GM12878 (cell line): ENCODE measurements at regions of chr9 and their contacts with region 1.

Region 1: DNA sequence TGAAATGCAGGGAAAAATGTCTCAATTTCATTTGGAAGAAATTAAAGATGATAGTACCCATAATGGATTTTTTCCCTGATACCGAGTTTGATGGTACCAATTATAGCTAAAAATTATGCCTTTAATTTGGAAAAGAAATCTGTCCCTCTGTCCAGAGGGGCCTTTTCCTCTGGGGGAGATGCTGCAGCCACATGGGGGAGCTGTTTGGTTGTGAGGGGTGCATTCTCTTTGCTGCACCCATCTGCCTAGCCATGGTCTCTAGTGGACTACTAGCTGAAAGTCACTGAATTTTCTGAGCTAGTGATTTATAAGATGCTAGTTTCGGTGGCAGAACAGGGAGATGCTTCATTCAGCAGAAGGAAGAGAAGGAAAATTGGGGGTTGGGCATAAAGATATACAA is 9.6 kb downstream of the SEC61B start:
- DNase-seq: peak; percentile 25
- ATAC-seq: peak; percentile 53
- H3K4me3 ChIP-seq: no peak overlapping the region
- H3K27ac ChIP-seq: no peak overlapping the region
- H3K4me1 ChIP-seq: peaks cover 26% of the 10 kb centered on the region
- H3K27me3 ChIP-seq: no peaks in the 10 kb centered on the region
- CTCF ChIP-seq: peak; percentile 85 to 90 (median 88)
- EP300 ChIP-seq: no peak
- POLR2A ChIP-seq: no peak
- RAD21 ChIP-seq: peak; percentile 81

Region 2: GRCh38 chr9:98303623-98304125 is 928.0 kb before region 1 on chr9:
- CTCF ChIA-PET with region 1: no interaction called
- POLR2A ChIA-PET with region 1: no interaction called
- RAD21 ChIA-PET with region 1: no interaction called
- SMC1A ChIA-PET with region 1: no interaction called
- in situ Hi-C with region 1: no loop called
- intact Hi-C with region 1: no loop called
- DNase-seq: no peak
- ATAC-seq: no peak
- H3K4me3 ChIP-seq: no peak overlapping the region
- H3K27ac ChIP-seq: no peak overlapping the region
- H3K4me1 ChIP-seq: no peaks in the 10 kb centered on the region
- H3K27me3 ChIP-seq: no peaks in the 10 kb centered on the region
- CTCF ChIP-seq: no peak
- EP300 ChIP-seq: no peak
- POLR2A ChIP-seq: no peak
- RAD21 ChIP-seq: no peak

Region 3: GRCh38 chr9:99162759-99163364 is 68.8 kb before region 1 on chr9:
- CTCF ChIA-PET with region 1: interaction called, 38 read pairs
- POLR2A ChIA-PET with region 1: interaction called, 6 read pairs
- RAD21 ChIA-PET with region 1: interaction called, 22 read pairs
- SMC1A ChIA-PET with region 1: interaction called, 8 read pairs
- in situ Hi-C with region 1: no loop called
- intact Hi-C with region 1: no loop called
- DNase-seq: no peak
- ATAC-seq: peak; percentile 72
- H3K4me3 ChIP-seq: no peak overlapping the region
- H3K27ac ChIP-seq: no peak overlapping the region
- H3K4me1 ChIP-seq: peaks cover 12% of the 10 kb centered on the region
- H3K27me3 ChIP-seq: no peaks in the 10 kb centered on the region
- CTCF ChIP-seq: peak; percentile 49 to 81 (median 65); a peak in 5 of 6 replicates
- EP300 ChIP-seq: no peak
- POLR2A ChIP-seq: no peak
- RAD21 ChIP-seq: peak; percentile 94

Region 4: DNA sequence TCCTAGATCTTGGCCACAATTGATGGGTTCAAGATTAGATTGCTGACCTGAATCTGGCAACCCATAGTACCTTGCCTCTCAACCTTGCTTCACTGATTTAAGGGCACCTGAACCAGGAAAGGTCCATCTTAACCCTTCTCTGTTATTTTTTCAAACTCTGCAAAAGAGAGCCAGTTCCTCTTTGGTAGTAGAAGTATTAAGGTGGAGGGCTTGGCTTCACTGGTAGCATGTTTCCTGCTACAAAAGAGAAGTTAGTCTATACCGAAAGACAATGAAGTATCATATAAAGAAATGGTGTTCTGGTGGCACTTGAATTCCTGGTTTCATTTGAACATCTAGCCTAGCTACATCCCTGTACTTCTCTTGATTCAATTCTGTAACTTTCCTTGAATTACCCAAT is 18.5 kb before region 1 on chr9:
- CTCF ChIA-PET with region 1: interaction called, 106 read pairs
- POLR2A ChIA-PET with region 1: no interaction called
- RAD21 ChIA-PET with region 1: interaction called, 4 read pairs
- SMC1A ChIA-PET with region 1: interaction called, 24 read pairs
- in situ Hi-C with region 1: no loop called
- intact Hi-C with region 1: no loop called
- DNase-seq: no peak
- ATAC-seq: no peak
- H3K4me3 ChIP-seq: no peak overlapping the region
- H3K27ac ChIP-seq: no peak overlapping the region
- H3K4me1 ChIP-seq: no peaks in the 10 kb centered on the region
- H3K27me3 ChIP-seq: no peaks in the 10 kb centered on the region
- CTCF ChIP-seq: no peak
- EP300 ChIP-seq: no peak
- POLR2A ChIP-seq: no peak
- RAD21 ChIP-seq: no peak

Region 5: DNA sequence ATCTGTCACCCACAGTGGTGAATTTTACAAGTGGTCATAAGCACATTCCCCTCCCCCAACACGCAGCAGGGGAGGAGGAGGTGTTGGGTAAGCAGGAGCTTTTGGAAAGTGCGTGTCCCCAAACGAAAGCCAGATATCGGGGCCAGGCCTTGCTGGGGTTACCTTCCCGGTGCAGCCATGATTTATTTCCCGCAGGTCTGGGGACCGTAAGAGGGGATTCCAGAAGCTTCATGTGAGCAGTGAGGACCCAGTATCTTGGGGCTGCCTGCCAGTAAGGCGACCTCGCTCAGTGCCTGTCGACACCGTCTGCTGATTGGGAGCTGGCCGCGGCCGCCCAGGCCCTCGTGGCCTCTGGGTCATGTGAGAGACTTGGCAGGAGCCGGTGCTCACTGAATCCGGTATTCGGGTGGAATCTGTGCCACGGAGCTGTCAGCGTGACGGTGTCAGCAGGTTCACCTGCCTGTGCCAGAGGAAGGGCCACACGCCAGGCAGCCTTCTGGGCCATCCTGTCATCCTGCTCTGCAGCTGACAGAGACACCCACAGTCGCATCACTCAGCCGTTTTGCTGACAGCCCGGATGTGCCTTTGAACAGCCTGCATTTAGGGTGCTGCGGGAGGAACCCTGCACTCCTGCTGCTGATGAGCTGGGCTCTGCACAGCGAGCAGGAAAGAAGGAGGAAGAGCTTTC is 27.7 kb after region 1 on chr9:
- CTCF ChIA-PET with region 1: interaction called, 160 read pairs
- POLR2A ChIA-PET with region 1: interaction called, 13 read pairs
- RAD21 ChIA-PET with region 1: interaction called, 98 read pairs
- SMC1A ChIA-PET with region 1: interaction called, 96 read pairs
- in situ Hi-C with region 1: no loop called
- intact Hi-C with region 1: no loop called
- DNase-seq: no peak
- ATAC-seq: no peak
- H3K4me3 ChIP-seq: no peak overlapping the region
- H3K27ac ChIP-seq: peak overlapping the region; percentile 45
- H3K4me1 ChIP-seq: peaks cover 30% of the 10 kb centered on the region
- H3K27me3 ChIP-seq: no peaks in the 10 kb centered on the region
- CTCF ChIP-seq: no peak
- EP300 ChIP-seq: no peak
- POLR2A ChIP-seq: peak; percentile 85
- RAD21 ChIP-seq: no peak

Region 6: DNA sequence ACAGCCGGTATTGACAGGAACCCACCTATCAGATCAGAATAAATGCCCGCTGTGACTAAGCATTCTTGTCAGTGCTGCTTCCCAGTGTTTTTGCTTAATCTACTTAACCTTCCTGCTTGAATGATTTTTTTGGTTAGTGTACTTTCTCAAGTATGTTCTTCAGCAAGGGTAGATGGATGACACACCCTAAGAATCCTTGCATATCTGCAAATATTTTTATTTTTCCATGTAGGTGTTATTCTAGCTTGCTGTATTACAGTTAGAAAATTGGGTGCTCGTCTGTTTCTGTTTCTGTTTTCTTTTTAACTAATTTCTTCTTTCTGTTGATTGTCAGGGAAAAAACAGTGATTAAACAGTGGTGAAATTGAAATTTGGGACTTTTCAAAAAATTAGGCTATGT is 54.8 kb after region 1 on chr9:
- CTCF ChIA-PET with region 1: interaction called, 14 read pairs
- POLR2A ChIA-PET with region 1: interaction called, 5 read pairs
- RAD21 ChIA-PET with region 1: interaction called, 16 read pairs
- SMC1A ChIA-PET with region 1: interaction called, 5 read pairs
- in situ Hi-C with region 1: no loop called
- intact Hi-C with region 1: no loop called
- DNase-seq: no peak
- ATAC-seq: no peak
- H3K4me3 ChIP-seq: no peak overlapping the region
- H3K27ac ChIP-seq: no peak overlapping the region
- H3K4me1 ChIP-seq: no peaks in the 10 kb centered on the region
- H3K27me3 ChIP-seq: no peaks in the 10 kb centered on the region
- CTCF ChIP-seq: no peak
- EP300 ChIP-seq: no peak
- POLR2A ChIP-seq: no peak
- RAD21 ChIP-seq: no peak

Region 7: DNA sequence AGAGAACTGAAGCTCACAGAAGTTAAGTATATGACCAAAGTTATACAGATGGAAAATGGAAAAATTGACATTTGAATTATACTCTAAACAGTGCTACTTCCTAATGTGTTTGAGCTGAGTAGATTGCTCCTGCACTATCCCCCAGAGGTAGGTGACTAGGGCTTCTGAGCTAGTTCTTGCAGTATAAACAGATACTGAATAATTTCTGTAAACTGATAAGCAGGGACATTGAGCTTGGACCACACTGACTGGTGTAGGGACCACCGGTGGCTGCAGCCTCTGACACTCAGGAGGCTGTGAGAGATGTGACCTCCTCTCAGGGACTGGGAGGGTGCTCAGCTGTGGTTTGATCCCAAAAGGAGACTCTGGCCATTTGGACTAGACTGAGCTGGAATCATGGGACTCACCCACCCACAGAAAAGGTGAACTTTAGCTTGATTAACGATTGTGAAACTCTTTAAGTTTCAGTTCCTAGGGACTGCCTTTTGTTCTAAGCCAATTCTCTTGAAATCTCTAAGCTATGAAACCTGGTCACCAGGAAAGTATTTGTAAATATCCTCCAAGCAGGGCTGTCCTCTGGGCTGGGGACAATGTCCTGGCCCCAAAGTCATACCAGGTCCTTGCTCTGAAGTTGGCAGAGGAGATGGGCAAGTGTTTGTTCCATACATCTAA is 281.9 kb after region 1 on chr9:
- CTCF ChIA-PET with region 1: interaction called, 15 read pairs
- POLR2A ChIA-PET with region 1: no interaction called
- RAD21 ChIA-PET with region 1: interaction called, 10 read pairs
- SMC1A ChIA-PET with region 1: interaction called, 13 read pairs
- in situ Hi-C with region 1: no loop called
- intact Hi-C with region 1: no loop called
- DNase-seq: peak; percentile 59
- ATAC-seq: peak; percentile 88
- H3K4me3 ChIP-seq: no peak overlapping the region
- H3K27ac ChIP-seq: peak overlapping the region; percentile 42; the same call in 1 of the 2 replicates
- H3K4me1 ChIP-seq: peaks cover 34% of the 10 kb centered on the region
- H3K27me3 ChIP-seq: no peaks in the 10 kb centered on the region
- CTCF ChIP-seq: no peak
- EP300 ChIP-seq: peak; percentile 85 to 95
- POLR2A ChIP-seq: no peak
- RAD21 ChIP-seq: no peak

Region 8: GRCh38 chr9:100216178-100216787 is 984.6 kb after region 1 on chr9:
- CTCF ChIA-PET with region 1: interaction called, 15 read pairs
- POLR2A ChIA-PET with region 1: no interaction called
- RAD21 ChIA-PET with region 1: interaction called, 4 read pairs
- SMC1A ChIA-PET with region 1: interaction called, 5 read pairs
- in situ Hi-C with region 1: no loop called
- intact Hi-C with region 1: no loop called
- DNase-seq: peak; percentile 40
- ATAC-seq: peak; percentile 96
- H3K4me3 ChIP-seq: no peak overlapping the region
- H3K27ac ChIP-seq: no peak overlapping the region
- H3K4me1 ChIP-seq: peaks cover 17% of the 10 kb centered on the region
- H3K27me3 ChIP-seq: no peaks in the 10 kb centered on the region
- CTCF ChIP-seq: peak; percentile 75 to 79 (median 77)
- EP300 ChIP-seq: no peak
- POLR2A ChIP-seq: no peak
- RAD21 ChIP-seq: peak; percentile 88